ENCODE measurements at regions of chr11 and their contacts with region 1.

Region 1: GRCh38 chr11:75280227-75280701 is 39.7 kb downstream of the TPBGL start:
- DNase-seq: peak; percentile 66 to 84
- ATAC-seq: peak; percentile 60 to 88 (median 82)
- H3K4me3 ChIP-seq: no peak overlapping the region
- H3K27ac ChIP-seq: peak overlapping the region in 8 of 10 donors; percentile 1 to 58 (median 21)
- H3K4me1 ChIP-seq: peaks cover 0 to 28% (median 19%) of the 10 kb centered on the region in 9 donors
- H3K27me3 ChIP-seq: no peaks in the 10 kb centered on the region
- CTCF ChIP-seq: peak; percentile 96 to 99 (median 98)

Region 2: GRCh38 chr11:75160192-75160757 is 120.0 kb before region 1 on chr11:
- intact Hi-C with region 1: no loop called
- DNase-seq: peak in 1 of 2 donors; percentile 50
- ATAC-seq: peak; percentile 13 to 87 (median 57)
- H3K4me3 ChIP-seq: peak overlapping the region in 3 of 10 donors; percentile 7 to 20 (median 9)
- H3K27ac ChIP-seq: peak overlapping the region; percentile 32 to 92 (median 80)
- H3K4me1 ChIP-seq: peaks cover 5 to 92% (median 61%) of the 10 kb centered on the region in 9 donors
- H3K27me3 ChIP-seq: no peaks in the 10 kb centered on the region
- CTCF ChIP-seq: no peak

Region 3: GRCh38 chr11:75182669-75183068 is 97.6 kb before region 1 on chr11:
- intact Hi-C with region 1: no loop called
- DNase-seq: no peak
- ATAC-seq: peak in 7 of 8 donors; percentile 19 to 72 (median 51)
- H3K4me3 ChIP-seq: no peak overlapping the region
- H3K27ac ChIP-seq: peak overlapping the region in 4 of 10 donors; percentile 61 to 86 (median 67)
- H3K4me1 ChIP-seq: peaks cover 0 to 78% (median 25%) of the 10 kb centered on the region in 9 donors
- H3K27me3 ChIP-seq: no peaks in the 10 kb centered on the region
- CTCF ChIP-seq: no peak

Region 4: DNA sequence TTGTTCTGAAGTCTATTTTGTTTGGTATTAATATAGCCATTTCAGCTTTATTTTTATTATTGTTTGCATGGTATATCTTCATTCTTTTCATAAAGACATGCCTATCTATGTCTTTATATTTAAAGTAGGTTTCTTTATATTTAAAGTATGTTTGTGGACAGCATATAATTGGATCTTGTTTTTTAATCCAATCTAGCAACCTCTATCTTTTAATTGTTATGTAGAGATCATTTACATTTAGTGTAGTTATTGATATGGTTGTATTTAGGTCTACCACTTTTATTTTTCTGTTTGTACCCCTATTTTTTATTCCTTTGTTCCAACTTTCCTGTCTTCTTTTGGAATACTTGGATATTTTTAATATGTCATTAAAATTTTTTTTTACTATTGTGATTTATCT is 25.9 kb before region 1 on chr11:
- intact Hi-C with region 1: no loop called
- DNase-seq: no peak
- ATAC-seq: no peak
- H3K4me3 ChIP-seq: no peak overlapping the region
- H3K27ac ChIP-seq: no peak overlapping the region
- H3K4me1 ChIP-seq: no peaks in the 10 kb centered on the region
- H3K27me3 ChIP-seq: peaks cover 0 to 34% (median 7%) of the 10 kb centered on the region in 7 donors
- CTCF ChIP-seq: no peak

Region 5: GRCh38 chr11:75301601-75302345 is 21.5 kb after region 1 on chr11:
- intact Hi-C with region 1: loop called in 1 of 10 experiments (anchors 1 kb)
- DNase-seq: peak in 1 of 2 donors; percentile 48
- ATAC-seq: peak; percentile 53 to 89 (median 82)
- H3K4me3 ChIP-seq: no peak overlapping the region
- H3K27ac ChIP-seq: peak overlapping the region in 9 of 10 donors; percentile 26 to 83 (median 64)
- H3K4me1 ChIP-seq: peaks cover 8 to 55% (median 35%) of the 10 kb centered on the region in 9 donors
- H3K27me3 ChIP-seq: no peaks in the 10 kb centered on the region
- CTCF ChIP-seq: no peak

Region 6: DNA sequence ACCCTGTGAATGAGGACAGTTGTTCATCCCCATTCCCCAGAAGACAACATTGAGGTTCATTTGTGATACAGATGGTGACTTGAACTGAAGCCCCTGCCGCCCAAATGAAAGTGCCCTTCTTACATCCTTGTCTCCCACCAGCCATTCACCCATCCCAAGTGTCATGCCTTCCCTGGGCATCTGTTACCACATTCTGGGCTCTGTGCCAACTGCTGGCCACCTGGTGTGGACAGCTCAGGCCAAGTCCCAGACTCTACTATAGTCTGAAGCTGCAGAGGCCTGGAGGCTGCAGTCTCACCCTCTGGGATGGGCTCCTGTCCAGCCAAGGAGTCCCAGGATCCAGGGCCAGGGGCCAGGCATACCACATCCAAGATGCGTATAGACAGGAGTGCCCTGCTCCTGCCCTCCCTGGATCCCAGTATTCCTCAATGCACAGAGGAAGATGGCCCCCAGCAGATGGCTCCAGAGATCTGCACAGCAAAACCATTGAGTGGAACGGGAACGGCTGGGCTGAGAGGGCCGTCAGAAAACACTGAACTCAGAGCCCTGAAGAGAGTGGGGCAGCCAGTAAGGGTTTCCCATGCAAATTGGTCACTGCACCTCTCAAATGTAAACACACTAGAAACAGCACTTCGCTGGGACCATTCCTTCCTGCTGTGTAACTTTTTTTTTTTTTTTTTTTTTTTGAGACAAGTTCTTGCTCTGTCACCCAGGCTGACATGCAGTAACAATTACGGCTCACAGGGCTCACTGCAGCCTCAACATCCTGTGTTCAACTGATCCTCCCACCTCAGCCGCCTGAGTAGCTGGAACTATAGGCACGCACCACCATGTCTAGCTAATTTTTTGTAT is 48.4 kb after region 1 on chr11:
- intact Hi-C with region 1: loop called in 5 of 10 experiments (anchors 1 to 5 kb)
- DNase-seq: peak; percentile 63 to 79
- ATAC-seq: peak; percentile 73 to 92 (median 86)
- H3K4me3 ChIP-seq: no peak overlapping the region
- H3K27ac ChIP-seq: peak overlapping the region in 3 of 10 donors; percentile 4 to 66 (median 48)
- H3K4me1 ChIP-seq: peaks cover 7 to 69% (median 39%) of the 10 kb centered on the region in 9 donors
- H3K27me3 ChIP-seq: no peaks in the 10 kb centered on the region
- CTCF ChIP-seq: peak; percentile 52 to 80 (median 71)

Region 7: GRCh38 chr11:75383246-75383645 is 103.0 kb after region 1 on chr11:
- intact Hi-C with region 1: loop called (anchors 1 to 2 kb)
- DNase-seq: no peak
- ATAC-seq: no peak
- H3K4me3 ChIP-seq: no peak overlapping the region
- H3K27ac ChIP-seq: peak overlapping the region in 1 of 10 donors; percentile 60
- H3K4me1 ChIP-seq: peaks cover 0 to 34% (median 2%) of the 10 kb centered on the region in 9 donors
- H3K27me3 ChIP-seq: no peaks in the 10 kb centered on the region
- CTCF ChIP-seq: no peak

Region 8: GRCh38 chr11:75388386-75389275 is 108.4 kb after region 1 on chr11:
- intact Hi-C with region 1: loop called (anchors 1 to 2 kb)
- DNase-seq: peak; percentile 49 to 71
- ATAC-seq: peak; percentile 46 to 76 (median 64)
- H3K4me3 ChIP-seq: no peak overlapping the region
- H3K27ac ChIP-seq: peak overlapping the region in 4 of 10 donors; percentile 2 to 50 (median 36)
- H3K4me1 ChIP-seq: peaks cover 3 to 24% (median 7%) of the 10 kb centered on the region in 9 donors
- H3K27me3 ChIP-seq: no peaks in the 10 kb centered on the region
- CTCF ChIP-seq: peak; percentile 59 to 90 (median 86)

Region 9: DNA sequence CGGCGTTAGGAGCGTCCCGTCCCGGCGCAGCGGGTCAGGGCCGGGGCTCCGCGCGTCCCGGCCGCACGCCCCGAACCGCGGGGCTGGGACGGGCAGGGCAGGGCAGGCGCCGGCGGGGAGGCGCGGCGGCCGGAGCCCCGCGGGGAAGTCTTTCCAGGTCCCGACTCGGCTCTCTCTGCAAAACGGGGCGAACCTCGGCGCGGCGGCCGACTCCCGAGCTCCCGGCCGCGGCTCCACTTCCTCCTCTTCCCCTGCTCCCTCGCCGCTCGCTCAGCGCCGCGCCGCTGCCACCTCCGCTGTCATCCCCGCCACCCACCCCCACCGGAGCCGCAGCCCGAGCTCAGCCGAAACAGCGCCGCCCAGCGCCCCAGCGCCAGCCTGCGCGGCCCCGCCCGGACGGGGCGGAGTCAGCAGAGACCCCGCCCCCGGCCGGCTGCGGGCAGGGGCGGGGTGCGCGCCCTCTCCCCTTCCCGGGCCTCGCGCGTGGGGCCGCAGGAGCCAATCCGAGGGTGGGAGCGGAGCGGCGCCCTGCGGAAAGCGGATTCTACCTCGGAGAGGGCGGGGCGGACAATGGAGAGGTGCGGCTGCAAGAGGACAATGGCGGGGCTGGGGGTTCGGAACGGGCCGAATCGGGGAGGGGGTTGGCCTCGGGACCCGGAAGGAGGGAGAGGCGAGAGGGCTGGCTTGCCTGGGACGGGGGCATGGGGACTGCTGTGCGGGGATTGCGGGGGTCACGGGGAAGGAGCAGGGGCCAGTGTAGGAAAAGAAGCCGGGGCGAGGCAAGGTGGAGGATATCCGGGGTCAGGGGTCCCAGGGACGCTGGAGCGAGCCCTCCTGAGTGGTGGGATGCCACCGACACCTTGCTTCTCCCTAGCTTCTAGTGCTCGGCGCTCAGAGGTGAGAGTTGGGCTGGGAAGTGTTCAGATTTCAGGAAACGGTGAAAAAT is 245.6 kb after region 1 on chr11 and contains the start of gene GDPD5:
- intact Hi-C with region 1: loop called in 6 of 10 experiments (anchors 10 kb)
- DNase-seq: peak; percentile 80 to 83
- ATAC-seq: peak; percentile 95 to 98 (median 96)
- H3K4me3 ChIP-seq: peak within 1 kb of the TSS; percentile 65 to 98 (median 76)
- H3K27ac ChIP-seq: peak within 1 kb of the TSS in 6 of 10 donors; percentile 31 to 71 (median 47)
- H3K4me1 ChIP-seq: peaks cover 3 to 36% (median 23%) of the 10 kb centered on the region in 9 donors
- H3K27me3 ChIP-seq: peaks cover 0 to 22% (median 0%) of the 10 kb centered on the region in 7 donors
- CTCF ChIP-seq: peak; percentile 17 to 79 (median 57)
- total RNA-seq, gene GDPD5: 3.3 to 8.0 (median 4.1) TPM

Measured in heart right ventricle (tissue), 16 donors.